A549 (cell line): ENCODE measurements at regions of chr2 and their contacts with region 1.

Region 1: DNA sequence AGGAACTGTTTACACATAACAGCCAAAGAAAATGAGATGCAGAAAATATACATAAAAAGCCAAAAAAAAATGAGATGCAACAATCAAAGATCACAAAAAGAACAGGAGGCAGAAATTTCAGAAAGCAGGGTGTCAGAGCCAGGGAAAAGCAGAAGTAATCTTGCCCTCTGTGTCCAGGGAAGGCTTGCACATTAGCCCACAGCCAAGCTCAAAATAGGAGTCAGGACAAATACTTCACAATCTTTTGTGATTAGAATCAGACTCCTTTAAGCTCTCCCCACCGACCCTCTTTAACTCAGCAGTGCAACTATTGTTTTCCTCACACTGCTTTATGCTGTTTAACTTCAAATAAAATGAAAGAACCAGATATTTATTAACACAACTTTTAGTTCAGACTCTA is 34.6 kb downstream of the IAH1 start:
- DNase-seq: no peak
- ATAC-seq: no peak
- H3K4me3 ChIP-seq: no peak overlapping the region
- H3K27ac ChIP-seq: no peak overlapping the region
- H3K4me1 ChIP-seq: no peaks in the 10 kb centered on the region
- CTCF ChIP-seq: no peak
- EP300 ChIP-seq: no peak
- POLR2A ChIP-seq: no peak
- RAD21 ChIP-seq: no peak

Region 2: DNA sequence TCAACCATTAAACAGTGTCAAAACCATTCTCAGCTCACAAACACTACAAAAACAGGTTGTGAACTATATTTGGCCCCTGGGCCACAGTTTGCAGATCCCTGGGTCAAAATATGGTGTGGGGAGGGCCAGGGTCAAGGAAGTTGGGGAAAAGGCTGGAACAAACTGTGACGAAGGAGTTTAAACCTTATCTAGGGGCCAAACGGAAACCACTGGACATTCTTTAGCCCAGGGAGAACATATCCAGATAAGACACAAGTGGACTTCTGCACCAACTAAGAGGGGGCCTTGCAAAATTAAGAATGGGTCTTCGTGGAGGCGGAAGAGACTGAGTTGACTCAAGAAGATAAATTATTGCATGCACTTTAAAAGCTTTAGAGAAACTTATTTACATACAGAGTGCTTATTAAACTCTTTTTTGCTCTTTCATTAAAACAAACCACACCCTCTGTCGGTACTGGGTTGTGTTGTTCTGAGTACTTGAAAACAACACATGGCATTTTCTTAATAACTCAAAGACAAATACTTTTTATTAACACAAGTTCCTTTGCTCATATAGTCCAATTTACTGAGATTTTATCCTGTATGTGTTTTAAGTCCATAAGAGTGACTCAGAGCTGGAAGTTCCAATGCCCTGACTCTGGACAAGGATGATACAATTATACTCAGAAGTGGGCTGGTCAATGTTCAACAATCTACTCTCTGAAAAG is 307.6 kb before region 1 on chr2:
- CTCF ChIA-PET with region 1: no interaction called
- POLR2A ChIA-PET with region 1: no interaction called
- DNase-seq: no peak
- ATAC-seq: no peak
- H3K4me3 ChIP-seq: no peak overlapping the region
- H3K27ac ChIP-seq: no peak overlapping the region
- H3K4me1 ChIP-seq: peaks cover 13% of the 10 kb centered on the region
- CTCF ChIP-seq: no peak
- EP300 ChIP-seq: no peak
- POLR2A ChIP-seq: no peak
- RAD21 ChIP-seq: no peak

Region 3: GRCh38 chr2:9480157-9480556 is 28.8 kb before region 1 on chr2:
- CTCF ChIA-PET with region 1: no interaction called
- POLR2A ChIA-PET with region 1: no interaction called
- DNase-seq: no peak
- ATAC-seq: no peak
- H3K4me3 ChIP-seq: no peak overlapping the region
- H3K27ac ChIP-seq: no peak overlapping the region; a peak in 1 of 6 replicates
- H3K4me1 ChIP-seq: peaks cover 31% of the 10 kb centered on the region
- CTCF ChIP-seq: no peak
- EP300 ChIP-seq: no peak
- POLR2A ChIP-seq: no peak
- RAD21 ChIP-seq: no peak

Region 4: GRCh38 chr2:9492927-9493326 is 16.0 kb before region 1 on chr2:
- CTCF ChIA-PET with region 1: interaction called, 15 read pairs
- POLR2A ChIA-PET with region 1: no interaction called
- DNase-seq: no peak
- ATAC-seq: no peak
- H3K4me3 ChIP-seq: no peak overlapping the region
- H3K27ac ChIP-seq: no peak overlapping the region
- H3K4me1 ChIP-seq: peaks cover 11% of the 10 kb centered on the region; the same call in 2 of the 3 replicates
- CTCF ChIP-seq: no peak
- EP300 ChIP-seq: no peak
- POLR2A ChIP-seq: no peak
- RAD21 ChIP-seq: no peak

Region 5: DNA sequence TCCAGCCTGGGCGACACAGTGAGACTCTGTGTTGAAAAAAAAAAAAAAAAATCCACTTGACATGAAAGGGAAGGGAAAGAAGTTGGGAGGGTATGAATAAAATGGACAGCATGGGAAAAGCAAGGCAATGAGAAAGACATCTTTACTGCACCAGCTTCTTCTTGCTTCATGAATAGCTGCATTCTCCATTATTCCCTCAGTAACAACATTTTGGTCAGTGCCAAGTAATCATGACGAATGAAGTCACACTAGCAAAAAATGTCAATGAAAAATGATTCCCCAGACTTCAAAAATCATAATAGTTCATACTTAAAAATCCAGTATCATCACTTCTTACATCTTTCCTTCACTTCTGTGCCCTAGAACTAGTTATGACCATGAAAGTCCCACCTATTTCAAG is 16.3 kb after region 1 on chr2:
- CTCF ChIA-PET with region 1: no interaction called
- POLR2A ChIA-PET with region 1: no interaction called
- DNase-seq: no peak
- ATAC-seq: no peak
- H3K4me3 ChIP-seq: no peak overlapping the region
- H3K27ac ChIP-seq: no peak overlapping the region
- H3K4me1 ChIP-seq: peaks cover 11% of the 10 kb centered on the region
- CTCF ChIP-seq: no peak
- EP300 ChIP-seq: no peak
- POLR2A ChIP-seq: no peak
- RAD21 ChIP-seq: no peak